ENCODE measurements at regions of chr3 and their contacts with region 1.

Region 1: GRCh38 chr3:45546716-45547701 is 47.5 kb upstream of the LIMD1 start:
- DNase-seq: peak in 1 of 10 donors; percentile 52
- H3K4me3 ChIP-seq: no peak overlapping the region
- H3K27ac ChIP-seq: peak overlapping the region in 56 of 59 donors; percentile 42 to 98 (median 93)
- H3K27me3 ChIP-seq: no peaks in the 10 kb centered on the region
- CTCF ChIP-seq: peak in 48 of 56 donors; percentile 5 to 64 (median 42)

Region 2: GRCh38 chr3:45567730-45568172 is 20.7 kb after region 1 on chr3:
- intact Hi-C with region 1: loop called in 1 of 2 experiments (anchors 2 kb)
- DNase-seq: no peak
- H3K4me3 ChIP-seq: no peak overlapping the region
- H3K27ac ChIP-seq: peak overlapping the region in 16 of 59 donors; percentile 9 to 74 (median 45)
- H3K27me3 ChIP-seq: peaks cover 0 to 4% (median 0%) of the 10 kb centered on the region in 45 donors
- CTCF ChIP-seq: no peak

Region 3: DNA sequence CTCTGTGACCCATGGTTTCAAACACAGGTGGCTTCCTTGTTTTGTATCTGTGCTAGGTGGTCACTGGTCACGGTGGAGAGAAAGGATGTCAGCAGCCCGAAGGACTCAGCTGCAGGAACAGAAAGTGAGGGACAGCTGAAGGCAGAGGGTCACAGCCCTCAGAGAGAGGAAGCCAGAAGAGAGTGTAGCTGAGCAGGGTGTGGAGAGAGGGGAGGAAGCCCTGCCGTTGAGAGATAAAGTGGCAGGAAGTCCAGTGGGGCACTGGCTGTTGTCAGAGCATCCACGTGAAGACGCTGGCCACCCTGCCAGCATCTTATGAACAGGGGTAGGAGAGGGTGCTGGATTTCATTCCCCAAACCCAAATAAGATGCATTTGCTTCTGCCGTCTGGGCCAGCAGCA is 84.5 kb after region 1 on chr3:
- intact Hi-C with region 1: no loop called
- DNase-seq: no peak
- H3K4me3 ChIP-seq: peak overlapping the region in 1 of 59 donors; percentile 2
- H3K27ac ChIP-seq: no peak overlapping the region
- H3K27me3 ChIP-seq: no peaks in the 10 kb centered on the region
- CTCF ChIP-seq: no peak